Posterior vena cava (tissue), 2 donors: ENCODE measurements at regions of chr16 and their contacts with region 1.

Region 1: DNA sequence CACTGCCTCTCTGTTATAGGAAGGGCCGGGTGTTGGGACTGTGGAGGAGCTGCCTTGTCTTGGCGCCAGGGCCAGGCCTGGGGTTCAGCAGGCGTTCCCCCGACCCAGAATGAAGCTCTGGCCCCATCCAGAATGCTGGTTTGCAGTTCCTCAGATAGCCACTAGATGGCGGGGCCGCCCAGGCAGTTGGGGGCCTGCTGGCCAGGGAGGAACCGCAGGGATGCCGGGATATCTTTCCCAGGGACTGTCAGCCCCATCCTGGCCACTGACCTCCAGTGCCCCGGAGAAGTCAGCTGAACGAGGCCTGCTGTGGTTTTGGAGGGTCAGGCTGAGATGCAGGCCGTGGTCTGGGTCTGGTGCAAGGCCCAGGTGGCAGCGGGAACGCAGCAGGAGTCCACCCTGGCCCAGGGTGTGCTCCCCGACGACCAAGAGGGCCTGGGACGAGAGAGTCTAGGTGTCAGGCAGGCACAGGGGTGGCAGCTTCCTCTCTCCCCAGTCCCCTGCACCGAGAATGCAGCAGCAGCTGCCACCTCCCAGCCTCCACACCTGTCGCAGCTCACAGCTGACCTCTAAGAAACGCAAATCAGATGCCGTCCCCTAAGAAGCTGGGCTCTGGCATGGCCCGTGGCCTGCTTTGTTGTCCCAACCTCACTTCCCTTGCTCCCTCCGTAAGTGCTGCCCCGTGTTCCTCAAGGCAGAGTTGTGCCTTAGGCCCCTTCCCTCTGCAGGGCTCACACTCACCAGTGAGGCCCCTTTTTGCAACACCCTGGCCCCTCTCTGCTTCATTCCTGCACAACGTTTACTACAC is 51.2 kb downstream of the RMI2 start:
- DNase-seq: peak; percentile 94

Region 2: DNA sequence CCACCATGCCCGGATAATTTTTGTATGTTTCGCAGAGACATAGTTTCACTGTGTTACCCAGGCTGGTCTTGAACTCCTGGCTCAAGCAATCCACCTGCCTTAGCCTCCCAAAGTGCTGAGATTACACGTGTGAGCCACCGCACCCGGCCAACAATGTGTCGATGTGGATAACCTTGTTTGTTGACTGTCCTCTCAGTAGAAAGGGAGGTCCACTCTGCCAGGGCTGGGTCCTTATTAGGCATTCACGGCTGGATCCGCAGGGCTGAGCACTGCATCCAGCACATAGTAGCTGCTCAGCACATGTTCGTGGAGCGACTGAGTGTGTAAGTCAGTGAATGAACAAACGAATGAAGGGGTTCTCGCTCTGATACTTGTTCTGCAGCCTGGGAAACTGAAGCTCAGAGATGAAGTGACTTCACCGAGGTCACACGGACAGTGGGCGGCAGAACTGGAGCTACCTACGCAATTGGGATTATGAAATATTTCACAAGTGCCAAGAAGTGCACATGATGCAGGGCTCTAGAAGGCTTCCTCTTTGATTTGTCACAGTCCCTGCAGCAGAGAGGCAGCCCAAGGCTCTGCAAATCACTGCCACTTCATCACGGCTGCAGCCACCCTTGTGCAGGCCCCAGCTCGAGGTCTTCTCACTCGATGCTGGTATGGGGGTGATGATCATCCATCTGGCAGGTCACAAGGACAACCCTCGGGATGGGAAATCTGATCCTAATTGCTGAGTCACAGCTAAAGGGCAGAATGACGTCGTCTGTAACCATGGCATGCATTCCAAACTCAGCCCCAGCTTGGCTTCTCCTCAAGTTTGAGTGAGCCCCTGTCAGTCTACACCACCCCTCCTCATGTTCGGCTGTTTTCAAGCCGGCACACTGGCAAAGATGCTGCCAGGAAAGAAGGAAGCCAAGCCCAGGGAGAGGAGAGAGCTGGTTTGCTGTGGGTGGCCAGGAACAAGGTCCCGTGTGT is 243.8 kb after region 1 on chr16:
- intact Hi-C with region 1: loop called (anchors 5 kb)
- DNase-seq: peak; percentile 92

Region 3: GRCh38 chr16:11715246-11715947 is 319.0 kb after region 1 on chr16:
- intact Hi-C with region 1: loop called (anchors 5 to 10 kb)
- DNase-seq: no peak

Region 4: DNA sequence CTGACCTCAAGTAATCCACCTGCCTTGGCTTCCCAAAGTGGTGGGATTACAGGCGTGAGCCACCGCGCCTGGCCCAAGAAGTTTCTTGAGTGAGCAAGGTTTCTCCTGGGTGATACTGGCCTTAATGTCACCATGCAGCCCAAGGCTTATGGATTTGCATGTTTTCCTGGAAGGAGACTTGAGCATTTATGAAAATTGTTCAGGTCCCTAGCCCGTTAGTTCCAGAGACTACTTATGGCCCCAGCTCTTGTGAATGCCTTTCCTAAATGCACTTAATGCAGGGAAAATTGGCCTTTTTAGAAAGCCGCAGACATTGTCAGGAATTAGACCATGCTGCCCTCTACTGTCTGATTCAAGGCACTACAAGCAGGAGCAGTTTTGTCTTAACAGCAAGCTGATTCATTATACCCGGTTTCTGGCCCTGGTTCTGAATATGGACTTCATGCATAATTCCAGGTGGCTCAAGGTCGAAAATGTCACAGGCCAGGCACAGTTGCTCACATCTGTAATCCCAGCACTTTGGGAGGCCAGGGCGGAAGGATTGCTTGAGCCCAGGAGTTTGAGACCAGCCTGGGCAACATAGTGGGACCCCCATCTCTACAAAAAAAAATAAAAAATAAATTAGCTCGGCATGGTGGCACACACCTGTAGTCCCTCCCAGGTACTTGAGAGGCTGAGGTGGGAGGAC is 671.4 kb after region 1 on chr16:
- intact Hi-C with region 1: loop called in 1 of 2 experiments (anchors 10 kb)
- DNase-seq: peak; percentile 42